ENCODE measurements at regions of chr16 and their contacts with region 1.

Region 1: DNA sequence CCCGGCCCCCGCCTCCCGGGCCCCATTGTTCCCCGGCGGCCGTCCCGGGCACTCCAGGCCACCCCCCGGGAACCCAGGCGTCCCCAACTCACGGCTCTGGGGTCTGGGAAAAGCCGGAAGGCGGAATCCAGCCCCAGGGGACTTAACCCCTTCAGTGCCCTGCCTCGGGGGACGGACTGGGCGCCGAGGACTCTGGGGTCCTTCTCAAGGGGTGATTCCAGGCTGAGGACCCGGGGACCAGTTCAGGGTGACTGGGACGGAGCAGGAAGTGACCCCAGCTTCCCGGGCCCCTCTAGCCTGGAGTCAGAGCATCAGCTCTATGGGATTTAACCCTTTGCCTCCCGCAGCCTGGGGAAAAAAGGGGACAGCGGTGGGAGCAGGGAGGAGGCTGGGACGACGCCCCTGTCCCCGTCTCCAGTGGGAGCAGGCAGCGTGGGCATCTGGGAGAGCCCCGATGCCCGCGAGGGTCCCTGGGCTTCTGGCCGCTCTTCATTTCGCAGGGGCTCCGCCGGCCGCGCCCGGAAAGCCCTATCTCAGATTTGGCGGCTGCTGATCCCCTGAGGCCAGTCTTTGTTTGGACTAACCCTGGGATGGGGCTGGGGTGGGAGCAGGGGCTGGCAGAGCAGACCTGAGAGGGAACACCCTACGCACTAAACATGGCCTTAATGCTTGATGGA is at the start of gene ZNF629:
- H3K4me3 Mint-ChIP-seq: peak within 1 kb of the TSS; percentile 91
- H3K27ac Mint-ChIP-seq: peak within 1 kb of the TSS; percentile 92
- H3K4me1 Mint-ChIP-seq: peaks cover 28% of the 10 kb centered on the region
- H3K27me3 Mint-ChIP-seq: peaks cover 2% of the 10 kb centered on the region

Region 2: GRCh38 chr16:30805370-30806169 is 18.5 kb after region 1 on chr16:
- intact Hi-C with region 1: loop called (anchors 1 kb)
- H3K4me3 Mint-ChIP-seq: peak overlapping the region; percentile 82
- H3K27ac Mint-ChIP-seq: peak overlapping the region; percentile 81
- H3K4me1 Mint-ChIP-seq: peaks cover 43% of the 10 kb centered on the region
- H3K27me3 Mint-ChIP-seq: no peaks in the 10 kb centered on the region

Region 3: GRCh38 chr16:30858829-30859423 is 71.9 kb after region 1 on chr16:
- intact Hi-C with region 1: no loop called
- H3K4me3 Mint-ChIP-seq: no peak overlapping the region
- H3K27ac Mint-ChIP-seq: no peak overlapping the region
- H3K4me1 Mint-ChIP-seq: no peaks in the 10 kb centered on the region
- H3K27me3 Mint-ChIP-seq: no peaks in the 10 kb centered on the region

Measured in dendritic cell treated with granulocyte-macrophage colony-stimulating factor and Interleukin-4, amounts not matched to agents 40 ng/mL and 50 ng/mL, for 4 days (primary cell).